ENCODE measurements at regions of chr1 and their contacts with region 1.

Region 1: DNA sequence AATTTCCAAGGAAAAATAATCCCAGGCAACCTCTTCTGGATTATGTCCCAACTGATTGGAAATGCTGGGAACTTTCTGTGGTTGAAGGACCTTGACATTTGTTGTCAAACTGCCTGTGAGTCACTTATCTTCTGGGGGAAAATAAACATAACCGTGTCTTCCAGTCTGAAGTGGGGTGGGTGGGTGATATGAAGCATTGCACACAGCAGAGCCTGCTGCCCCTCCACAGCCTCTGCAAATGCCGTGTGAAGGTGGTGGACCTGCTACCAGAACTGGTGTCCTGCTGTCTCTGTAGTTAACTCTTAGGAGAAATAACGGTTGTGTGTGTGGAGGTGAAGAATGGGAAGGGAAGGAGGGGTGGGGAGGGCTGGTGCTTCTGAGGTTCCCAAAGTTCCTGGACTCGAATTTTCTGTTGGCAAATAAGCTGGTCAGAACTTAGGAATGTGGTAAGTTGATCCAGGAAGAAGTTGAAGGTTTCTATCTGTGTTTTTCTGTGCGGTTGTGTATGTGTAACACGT is 23.2 kb downstream of the GALNT2 start:
- DNase-seq: peak; percentile 84
- H3K4me3 Mint-ChIP-seq: peak overlapping the region; percentile 9
- H3K27ac Mint-ChIP-seq: peak overlapping the region; percentile 80
- H3K4me1 Mint-ChIP-seq: peaks cover 76% of the 10 kb centered on the region
- H3K27me3 Mint-ChIP-seq: no peaks in the 10 kb centered on the region
- CTCF ChIP-seq: no peak

Region 2: DNA sequence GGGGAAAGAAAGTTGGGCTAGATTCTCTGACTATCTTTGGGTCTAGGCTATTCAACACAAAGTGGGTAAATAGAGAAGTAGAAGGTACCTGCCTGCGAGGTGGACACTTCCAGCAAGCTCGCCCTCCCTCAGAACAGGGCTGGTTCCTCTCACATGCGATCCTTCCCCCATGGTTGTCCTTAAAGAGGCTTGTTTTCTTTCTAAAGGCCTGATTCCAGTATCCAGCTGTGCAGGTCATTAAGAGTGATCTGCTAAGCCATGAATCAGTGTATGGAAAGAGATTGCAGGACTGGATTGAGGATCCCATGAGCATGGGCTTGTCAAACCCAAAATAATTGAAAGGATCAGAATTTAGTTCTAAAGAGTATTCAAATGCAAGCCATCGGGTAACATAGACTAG is 275.2 kb before region 1 on chr1:
- CTCF ChIA-PET with region 1: no interaction called
- POLR2A ChIA-PET with region 1: no interaction called
- intact Hi-C with region 1: no loop called
- DNase-seq: no peak
- H3K4me3 Mint-ChIP-seq: no peak overlapping the region
- H3K27ac Mint-ChIP-seq: no peak overlapping the region
- H3K4me1 Mint-ChIP-seq: peaks cover 7% of the 10 kb centered on the region
- H3K27me3 Mint-ChIP-seq: peaks cover 16% of the 10 kb centered on the region
- CTCF ChIP-seq: no peak

Region 3: DNA sequence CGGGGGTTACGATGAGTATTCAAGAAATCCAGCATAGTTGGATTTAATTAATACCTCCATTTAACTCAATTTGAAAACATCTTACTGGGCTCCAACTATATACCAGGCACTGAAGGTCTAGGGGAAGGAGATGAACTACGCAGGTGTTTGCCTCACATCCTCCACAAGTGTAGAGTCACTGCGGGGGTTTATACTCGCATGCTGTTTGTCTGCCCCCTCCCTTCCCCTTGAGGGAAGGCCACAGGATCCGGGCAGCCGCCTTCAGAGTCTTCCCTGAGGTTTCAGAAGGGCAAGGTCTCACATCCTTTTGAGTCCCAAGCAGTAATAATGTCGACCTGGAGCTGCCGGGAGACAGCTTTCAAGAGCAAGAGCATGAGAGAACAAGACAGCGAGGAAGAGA is 165.6 kb before region 1 on chr1:
- CTCF ChIA-PET with region 1: no interaction called
- POLR2A ChIA-PET with region 1: no interaction called
- intact Hi-C with region 1: no loop called
- DNase-seq: no peak
- H3K4me3 Mint-ChIP-seq: no peak overlapping the region
- H3K27ac Mint-ChIP-seq: no peak overlapping the region
- H3K4me1 Mint-ChIP-seq: no peaks in the 10 kb centered on the region
- H3K27me3 Mint-ChIP-seq: peaks cover 14% of the 10 kb centered on the region
- CTCF ChIP-seq: no peak

Region 4: GRCh38 chr1:230113607-230114236 is 23.5 kb after region 1 on chr1:
- CTCF ChIA-PET with region 1: interaction called, 6 read pairs
- POLR2A ChIA-PET with region 1: interaction called, 162 read pairs
- intact Hi-C with region 1: no loop called
- DNase-seq: peak; percentile 98
- H3K4me3 Mint-ChIP-seq: peak overlapping the region; percentile 62
- H3K27ac Mint-ChIP-seq: peak overlapping the region; percentile 98
- H3K4me1 Mint-ChIP-seq: peaks cover 47% of the 10 kb centered on the region
- H3K27me3 Mint-ChIP-seq: no peaks in the 10 kb centered on the region
- CTCF ChIP-seq: no peak

Measured in MCF 10A (cell line).